Mammary epithelial cell (primary cell): ENCODE measurements at regions of chr19 and their contacts with region 1.

Region 1: DNA sequence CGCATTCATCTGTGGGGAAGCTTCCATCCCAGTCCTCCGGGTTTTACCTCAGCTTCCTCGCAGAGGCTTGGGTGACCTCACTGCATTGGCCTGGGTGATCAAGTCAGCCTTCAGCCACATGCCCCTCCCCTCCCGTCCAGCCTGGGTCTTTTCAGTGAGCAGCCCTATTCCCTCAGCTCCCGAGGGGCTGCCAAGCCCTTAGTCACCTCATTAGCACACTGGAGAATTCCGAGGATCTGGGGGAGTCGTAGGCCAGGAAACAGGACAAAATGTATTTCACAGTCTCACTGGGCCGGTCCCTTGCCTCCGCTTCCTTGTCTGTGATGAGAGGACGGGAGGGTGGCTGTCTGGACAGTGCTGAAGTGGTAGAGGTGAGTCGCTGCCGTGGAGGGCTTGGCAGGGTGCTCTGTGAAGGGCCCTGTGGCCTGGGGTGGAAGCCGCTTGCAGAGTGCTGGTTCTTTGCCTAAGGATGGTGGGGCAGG is 19.9 kb downstream of the KDM4B start:
- DNase-seq: no peak
- H3K4me3 ChIP-seq: no peak overlapping the region
- H3K27ac ChIP-seq: no peak overlapping the region
- H3K4me1 ChIP-seq: no peaks in the 10 kb centered on the region
- H3K27me3 ChIP-seq: no peaks in the 10 kb centered on the region
- CTCF ChIP-seq: no peak

Region 2: GRCh38 chr19:4939466-4939865 is 49.3 kb before region 1 on chr19:
- CTCF ChIA-PET with region 1: no interaction called
- dilution Hi-C with region 1: loop called (anchors 5 kb)
- in situ Hi-C with region 1: no loop called
- intact Hi-C with region 1: no loop called
- DNase-seq: no peak
- H3K4me3 ChIP-seq: no peak overlapping the region
- H3K27ac ChIP-seq: no peak overlapping the region
- H3K4me1 ChIP-seq: no peaks in the 10 kb centered on the region
- H3K27me3 ChIP-seq: no peaks in the 10 kb centered on the region
- CTCF ChIP-seq: no peak

Region 3: DNA sequence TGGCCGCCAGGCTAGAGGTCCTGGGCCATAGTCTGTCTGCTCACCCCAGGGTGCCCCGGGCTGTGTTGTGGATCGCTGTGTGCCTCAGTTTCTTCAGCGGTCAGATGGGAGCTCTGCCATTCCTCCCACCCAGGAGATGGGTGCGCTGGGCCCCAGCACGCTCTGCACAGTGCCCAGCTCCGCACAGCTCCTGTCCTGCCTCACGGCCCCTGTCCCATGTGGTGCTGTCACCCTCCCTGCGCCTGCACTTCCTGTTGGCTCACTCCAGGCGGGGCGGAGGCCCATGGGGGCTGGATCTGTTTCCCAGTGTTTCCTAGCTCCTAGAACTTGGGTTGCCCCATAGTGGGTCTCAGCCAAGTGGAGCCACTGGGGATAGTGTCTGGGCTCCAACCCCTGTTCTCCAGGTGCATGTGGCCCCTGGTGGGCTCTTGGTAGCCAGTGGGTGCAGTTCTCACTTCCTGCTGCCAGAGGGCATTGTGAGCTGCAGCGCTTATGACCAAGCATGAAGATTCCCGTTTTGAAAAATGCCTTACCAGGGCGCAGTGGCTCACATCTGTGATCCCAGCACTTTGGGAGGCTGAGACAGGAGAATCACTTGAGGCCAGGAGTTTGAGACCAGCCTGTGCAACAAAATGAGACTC is 49.9 kb after region 1 on chr19:
- CTCF ChIA-PET with region 1: no interaction called
- dilution Hi-C with region 1: loop called (anchors 5 kb)
- in situ Hi-C with region 1: no loop called
- intact Hi-C with region 1: no loop called
- DNase-seq: no peak
- H3K4me3 ChIP-seq: no peak overlapping the region
- H3K27ac ChIP-seq: no peak overlapping the region
- H3K4me1 ChIP-seq: peaks cover 24% of the 10 kb centered on the region
- H3K27me3 ChIP-seq: no peaks in the 10 kb centered on the region
- CTCF ChIP-seq: peak; percentile 36 to 40